ENCODE measurements at regions of chr3 and their contacts with region 1.

Region 1: GRCh38 chr3:195859061-195859845 is 47.5 kb upstream of the MUC4 start:
- DNase-seq: peak; percentile 65

Region 2: DNA sequence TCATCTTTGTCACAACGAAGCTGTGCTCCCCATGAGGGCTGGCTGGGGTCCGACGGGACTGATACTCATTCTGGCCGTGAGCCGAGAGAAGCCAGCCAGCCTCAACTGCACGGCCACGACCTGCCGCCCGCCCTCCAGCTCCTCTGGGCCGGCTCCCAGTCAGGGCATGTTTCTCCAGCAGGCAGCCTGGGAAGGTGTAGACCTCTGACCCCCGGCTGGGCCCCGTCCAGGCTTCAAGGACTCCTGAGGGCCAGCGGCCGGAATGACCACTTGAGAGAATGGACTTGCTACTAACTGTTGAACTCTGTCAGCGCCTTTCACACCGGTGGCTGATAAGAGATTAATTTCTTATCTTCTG is 29.4 kb before region 1 on chr3:
- CTCF ChIA-PET with region 1: no interaction called
- POLR2A ChIA-PET with region 1: no interaction called
- DNase-seq: no peak

Region 3: GRCh38 chr3:195914648-195915473 is 55.6 kb after region 1 on chr3:
- CTCF ChIA-PET with region 1: interaction called, 10 read pairs
- POLR2A ChIA-PET with region 1: no interaction called
- DNase-seq: peak; percentile 83

Measured in HEK293T (cell line).